Naive thymus-derived CD4-positive, alpha-beta T cell (primary cell): ENCODE measurements at regions of chr6 and their contacts with region 1.

Region 1: DNA sequence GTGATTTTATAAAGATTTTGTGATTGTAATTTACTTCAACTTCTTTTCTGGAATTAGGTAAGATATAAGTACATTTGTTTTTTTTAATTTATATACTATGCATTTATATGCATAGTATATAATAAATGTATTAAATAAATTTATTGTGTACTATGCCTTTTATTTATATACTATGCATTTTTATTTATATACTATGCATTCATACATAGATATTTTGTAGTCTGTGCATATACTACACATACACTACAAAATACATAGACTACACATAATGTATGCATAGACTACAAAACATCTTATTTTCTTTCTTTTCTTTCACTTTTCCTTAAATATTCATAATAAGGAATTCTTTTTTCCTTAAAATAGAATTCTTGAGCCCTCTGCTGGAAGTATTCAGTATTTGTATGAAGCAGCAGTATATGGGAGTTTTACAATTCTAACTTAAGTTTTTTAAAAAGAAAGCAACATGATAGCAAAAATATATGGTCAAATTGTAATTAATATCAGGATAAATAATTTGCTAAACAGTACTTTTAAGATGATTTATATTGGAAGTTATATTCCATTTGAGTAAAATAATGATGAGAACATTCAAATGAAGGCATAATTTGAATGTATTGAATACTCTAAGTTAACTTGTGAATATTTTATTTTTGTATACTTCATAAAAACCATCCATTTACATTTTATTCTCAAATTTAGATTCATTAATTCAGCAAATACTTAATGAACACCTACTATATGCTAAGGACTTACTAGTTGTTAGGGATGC is 129.3 kb downstream of the KLHL32 start:
- DNase-seq: no peak
- ATAC-seq: no peak
- H3K4me3 ChIP-seq: no peak overlapping the region
- H3K4me3 Mint-ChIP-seq: no peak overlapping the region
- H3K27ac ChIP-seq: no peak overlapping the region
- H3K27ac Mint-ChIP-seq: no peak overlapping the region
- H3K4me1 ChIP-seq: no peaks in the 10 kb centered on the region
- H3K4me1 Mint-ChIP-seq: peaks cover 0 to 13% (median 11%) of the 10 kb centered on the region in 7 donors
- H3K27me3 ChIP-seq: no peaks in the 10 kb centered on the region
- H3K27me3 Mint-ChIP-seq: peaks cover 0 to 5% (median 0%) of the 10 kb centered on the region in 5 donors

Region 2: GRCh38 chr6:96626759-96627364 is 427.0 kb before region 1 on chr6:
- CTCF ChIA-PET with region 1: interaction called, 3 read pairs
- POLR2A ChIA-PET with region 1: no interaction called
- intact Hi-C with region 1: loop called (anchors 1 kb)
- DNase-seq: peak in 5 of 9 donors; percentile 7 to 33 (median 13)
- ATAC-seq: peak; percentile 46
- H3K4me3 ChIP-seq: no peak overlapping the region
- H3K4me3 Mint-ChIP-seq: no peak overlapping the region
- H3K27ac ChIP-seq: no peak overlapping the region
- H3K27ac Mint-ChIP-seq: no peak overlapping the region
- H3K4me1 ChIP-seq: no peaks in the 10 kb centered on the region
- H3K4me1 Mint-ChIP-seq: peaks cover 0 to 3% (median 0%) of the 10 kb centered on the region in 7 donors
- H3K27me3 ChIP-seq: no peaks in the 10 kb centered on the region
- H3K27me3 Mint-ChIP-seq: peaks cover 5 to 23% (median 14%) of the 10 kb centered on the region in 5 donors